Activated naive CD4-positive, alpha-beta T cell treated with anti-CD3 and anti-CD28 coated beads for 36 hours (primary cell): ENCODE measurements at regions of chr9 and their contacts with region 1.

Region 1: DNA sequence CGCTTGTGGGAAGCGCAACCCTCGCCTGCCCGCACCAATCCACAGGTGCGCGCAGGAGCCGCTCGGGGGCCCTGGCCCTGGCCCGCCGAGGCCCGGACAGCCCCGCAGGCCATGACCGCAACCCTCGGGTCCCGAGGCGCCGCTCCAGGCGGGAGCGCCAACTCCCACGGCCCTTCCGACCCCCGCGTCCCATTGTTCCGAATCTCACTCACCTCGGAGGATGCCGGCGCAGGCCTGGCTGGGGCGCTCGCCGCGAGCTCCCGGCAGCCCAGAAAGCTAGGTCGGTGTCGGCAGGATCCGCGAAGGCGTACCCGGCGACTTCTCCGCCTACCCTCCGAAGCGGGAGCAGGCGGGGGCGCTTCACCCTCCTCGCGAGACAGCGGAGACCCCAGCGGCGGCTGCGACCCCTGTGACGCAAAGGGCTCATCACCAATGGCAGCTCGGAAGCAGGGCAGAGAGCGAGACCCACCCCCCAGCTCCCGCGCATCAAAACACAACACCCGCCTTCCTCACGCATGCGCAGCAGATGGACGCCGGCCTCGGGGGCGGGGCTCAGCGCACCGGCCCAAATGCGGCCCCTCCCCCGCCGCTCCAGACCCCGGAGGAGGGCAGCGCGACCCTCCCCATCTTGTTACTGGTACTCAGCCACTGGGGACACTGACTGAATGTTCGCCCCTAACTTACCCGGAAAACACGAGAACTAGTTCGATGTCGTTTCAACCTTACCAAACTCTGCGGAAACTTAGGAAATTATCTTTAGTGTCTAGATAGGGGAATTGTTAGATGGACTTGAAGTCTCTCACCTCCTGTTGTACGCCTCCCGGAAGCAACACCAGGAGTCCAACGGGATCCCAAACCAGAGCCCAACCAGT is 1.3 kb upstream of the SMIM27 start:
- DNase-seq: peak; percentile 93
- H3K4me3 Mint-ChIP-seq: peak overlapping the region; percentile 95
- H3K27ac Mint-ChIP-seq: peak overlapping the region; percentile 99
- H3K4me1 Mint-ChIP-seq: peaks cover 43% of the 10 kb centered on the region
- H3K27me3 Mint-ChIP-seq: no peaks in the 10 kb centered on the region

Region 2: DNA sequence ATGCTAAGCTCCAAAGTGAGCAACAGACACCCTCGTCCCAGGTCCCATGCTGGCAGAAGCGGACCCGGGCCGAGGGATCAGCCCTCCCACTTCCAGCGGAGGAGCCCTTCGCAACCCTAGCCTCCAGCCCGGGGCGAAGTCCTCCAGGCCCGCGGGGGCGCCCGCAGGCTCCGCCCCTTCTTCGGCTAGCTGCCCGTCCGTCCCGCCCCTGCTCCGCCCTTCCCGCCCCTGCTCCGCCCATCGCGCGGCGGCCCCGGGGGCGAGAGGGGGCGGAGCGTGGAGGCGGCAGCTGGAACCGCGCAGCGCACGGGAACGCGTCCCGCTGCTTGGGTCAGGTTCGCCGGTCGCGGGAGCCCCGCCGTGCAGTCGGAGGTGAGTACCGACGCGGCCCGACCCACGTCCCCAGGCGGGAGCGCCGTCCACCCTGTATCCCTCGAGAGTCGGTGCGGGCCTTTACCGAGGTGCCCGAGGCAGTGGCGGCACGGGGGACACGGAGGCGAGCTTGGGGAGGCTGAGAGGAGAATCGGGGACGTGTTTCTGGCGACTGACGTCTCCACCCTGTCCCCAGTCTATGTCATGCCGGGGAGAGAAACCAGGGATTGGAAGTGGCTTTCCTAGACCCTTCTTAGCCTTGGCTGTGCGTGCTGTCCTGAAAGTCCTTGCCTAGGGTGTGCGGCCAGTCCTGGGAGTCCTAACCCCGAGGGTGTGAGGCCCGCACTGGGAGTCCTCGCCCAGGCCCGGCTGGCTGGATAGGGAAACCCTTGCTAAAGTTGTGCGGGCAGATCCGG is 166.2 kb before region 1 on chr9 and contains the start of gene ACO1:
- CTCF ChIA-PET with region 1: interaction called, 10 read pairs
- intact Hi-C with region 1: loop called (anchors 1 kb)
- DNase-seq: peak; percentile 82
- H3K4me3 Mint-ChIP-seq: peak within 1 kb of the TSS; percentile 79
- H3K27ac Mint-ChIP-seq: no peak within 1 kb of the TSS
- H3K4me1 Mint-ChIP-seq: peaks cover 16% of the 10 kb centered on the region
- H3K27me3 Mint-ChIP-seq: peaks cover 3% of the 10 kb centered on the region
- total RNA-seq, gene ACO1: 13.2 to 14.8 TPM

Region 3: GRCh38 chr9:32468740-32469139 is 82.1 kb before region 1 on chr9:
- CTCF ChIA-PET with region 1: no interaction called
- intact Hi-C with region 1: no loop called
- DNase-seq: no peak
- H3K4me3 Mint-ChIP-seq: no peak overlapping the region
- H3K27ac Mint-ChIP-seq: no peak overlapping the region
- H3K4me1 Mint-ChIP-seq: no peaks in the 10 kb centered on the region
- H3K27me3 Mint-ChIP-seq: no peaks in the 10 kb centered on the region

Region 4: DNA sequence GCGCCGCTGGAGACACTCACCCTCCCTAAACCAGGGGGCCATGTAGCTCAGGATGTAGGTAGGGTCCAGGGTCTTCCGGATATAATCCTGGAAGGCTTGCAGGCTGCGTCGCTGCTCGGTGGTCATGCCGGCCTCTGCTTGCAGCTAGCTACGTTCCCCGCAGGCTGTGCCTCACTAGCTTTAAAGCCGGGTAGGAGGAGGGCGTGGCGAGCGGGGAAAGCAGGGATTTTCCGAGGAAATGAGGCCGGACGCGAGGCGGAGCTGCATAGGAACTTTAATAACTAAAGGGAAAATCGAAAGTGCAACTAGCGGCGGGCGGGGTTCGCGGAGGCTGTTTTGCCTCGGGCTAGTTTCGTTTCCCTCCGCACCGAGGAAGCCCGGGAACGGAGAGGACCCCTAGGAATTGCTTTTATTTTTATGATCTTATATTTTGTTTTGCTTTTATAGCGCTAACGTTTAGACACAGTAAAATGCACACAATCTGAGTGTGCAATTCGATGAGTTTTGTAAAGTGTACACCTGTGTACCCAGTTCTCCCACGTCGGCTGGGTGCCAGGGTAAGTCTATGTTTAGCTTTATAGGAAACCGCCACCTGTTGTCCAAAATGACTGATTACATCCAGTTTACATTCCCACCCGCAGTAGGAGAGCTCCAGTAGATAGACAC is 24.6 kb before region 1 on chr9 and contains the start of gene RIGI:
- CTCF ChIA-PET with region 1: interaction called, 12 read pairs
- intact Hi-C with region 1: loop called (anchors 1 kb)
- DNase-seq: peak; percentile 90
- H3K4me3 Mint-ChIP-seq: peak within 1 kb of the TSS; percentile 77
- H3K27ac Mint-ChIP-seq: peak within 1 kb of the TSS; percentile 84
- H3K4me1 Mint-ChIP-seq: peaks cover 32% of the 10 kb centered on the region
- H3K27me3 Mint-ChIP-seq: no peaks in the 10 kb centered on the region
- total RNA-seq, gene RIGI: 7.5 to 8.4 TPM

Region 5: GRCh38 chr9:32571969-32572899 is 21.4 kb after region 1 on chr9:
- CTCF ChIA-PET with region 1: interaction called, 15 read pairs
- intact Hi-C with region 1: loop called (anchors 1 kb)
- DNase-seq: peak; percentile 88
- H3K4me3 Mint-ChIP-seq: peak overlapping the region; percentile 88
- H3K27ac Mint-ChIP-seq: peak overlapping the region; percentile 92
- H3K4me1 Mint-ChIP-seq: peaks cover 16% of the 10 kb centered on the region
- H3K27me3 Mint-ChIP-seq: no peaks in the 10 kb centered on the region

Region 6: GRCh38 chr9:32589083-32589723 is 38.4 kb after region 1 on chr9:
- CTCF ChIA-PET with region 1: no interaction called
- intact Hi-C with region 1: no loop called
- DNase-seq: no peak
- H3K4me3 Mint-ChIP-seq: no peak overlapping the region
- H3K27ac Mint-ChIP-seq: no peak overlapping the region
- H3K4me1 Mint-ChIP-seq: no peaks in the 10 kb centered on the region
- H3K27me3 Mint-ChIP-seq: peaks cover 16% of the 10 kb centered on the region

Region 7: DNA sequence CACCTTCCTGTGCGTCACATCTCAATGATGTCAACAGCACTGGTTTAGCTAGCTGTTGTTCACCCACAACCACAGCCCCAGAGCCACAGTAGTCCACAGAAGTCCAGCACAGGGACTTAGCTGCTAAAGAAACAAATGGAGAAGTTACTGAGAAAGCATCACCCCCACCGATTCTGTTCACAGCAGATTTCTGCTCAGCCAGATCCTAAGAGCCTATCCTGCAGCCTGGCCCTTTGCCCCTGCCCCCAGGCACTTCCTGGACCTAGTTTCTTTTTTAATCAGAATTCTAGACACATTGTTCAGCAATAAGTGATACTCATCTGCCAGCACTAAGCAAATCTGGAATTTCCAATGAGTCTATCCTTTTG is 608.9 kb after region 1 on chr9:
- CTCF ChIA-PET with region 1: no interaction called
- intact Hi-C with region 1: loop called (anchors 2 kb)
- DNase-seq: peak; percentile 87
- H3K4me3 Mint-ChIP-seq: peak overlapping the region; percentile 64
- H3K27ac Mint-ChIP-seq: peak overlapping the region; percentile 97
- H3K4me1 Mint-ChIP-seq: peaks cover 92% of the 10 kb centered on the region
- H3K27me3 Mint-ChIP-seq: no peaks in the 10 kb centered on the region

Region 8: GRCh38 chr9:33264473-33265177 is 713.8 kb after region 1 on chr9 and contains the starts of genes BAG1 and CHMP5:
- CTCF ChIA-PET with region 1: no interaction called
- intact Hi-C with region 1: loop called (anchors 1 kb)
- DNase-seq: peak; percentile 100
- H3K4me3 Mint-ChIP-seq: peak within 1 kb of the TSS; percentile 94
- H3K27ac Mint-ChIP-seq: peak within 1 kb of the TSS; percentile 98
- H3K4me1 Mint-ChIP-seq: peaks cover 47% of the 10 kb centered on the region
- H3K27me3 Mint-ChIP-seq: no peaks in the 10 kb centered on the region
- total RNA-seq, gene BAG1: 38.1 to 40.5 TPM
- total RNA-seq, gene CHMP5: 151 to 162 TPM

Region 9: GRCh38 chr9:33452828-33453271 is 902.1 kb after region 1 on chr9:
- CTCF ChIA-PET with region 1: no interaction called
- intact Hi-C with region 1: loop called (anchors 10 kb)
- DNase-seq: peak; percentile 82
- H3K4me3 Mint-ChIP-seq: no peak overlapping the region
- H3K27ac Mint-ChIP-seq: peak overlapping the region; percentile 83
- H3K4me1 Mint-ChIP-seq: peaks cover 72% of the 10 kb centered on the region
- H3K27me3 Mint-ChIP-seq: no peaks in the 10 kb centered on the region